H1 (cell line): ENCODE measurements at regions of chr4 and their contacts with region 1.

Region 1: GRCh38 chr4:71184195-71184781 is 154.5 kb upstream of the SLC4A4 start:
- DNase-seq: no peak
- H3K4me3 ChIP-seq: no peak overlapping the region
- H3K27ac ChIP-seq: no peak overlapping the region
- H3K4me1 ChIP-seq: 0 out of 7 replicates have a peak, but pooled peaks cover 0 to 4% (median 2%) of the 10 kb centered on the region in 4 experiments
- H3K27me3 ChIP-seq: peaks cover 3 to 27% (median 17%) of the 10 kb centered on the region in 4 experiments
- CTCF ChIP-seq: peak in 2 of 3 experiments; percentile 37 to 66; a peak in 2 of 4 replicates
- EP300 ChIP-seq: no peak
- POLR2A ChIP-seq: no peak
- RAD21 ChIP-seq: peak; percentile 63 to 68

Region 2: DNA sequence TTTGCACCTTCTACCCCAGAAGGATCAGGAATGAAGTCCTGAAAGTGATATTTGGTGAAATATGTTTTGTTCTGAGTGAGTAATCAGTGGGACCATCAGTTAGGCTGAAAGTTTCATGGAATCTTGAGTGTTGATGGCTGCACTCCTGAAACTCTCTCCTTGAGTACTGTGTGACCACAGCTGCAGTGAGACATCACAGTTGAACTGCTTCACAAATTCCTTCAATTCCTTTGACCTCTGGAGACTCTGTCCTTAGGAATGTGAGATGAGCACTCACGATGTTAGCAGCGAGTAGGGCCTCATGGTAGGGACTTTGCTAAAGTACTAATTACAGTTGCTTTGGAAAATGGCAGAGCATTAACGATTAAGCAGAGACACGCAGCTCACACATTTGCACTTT is 11.6 kb after region 1 on chr4:
- CTCF ChIA-PET with region 1: interaction called, 16 read pairs
- POLR2A ChIA-PET with region 1: interaction called, 3 read pairs
- DNase-seq: no peak
- H3K4me3 ChIP-seq: no peak overlapping the region
- H3K27ac ChIP-seq: no peak overlapping the region
- H3K4me1 ChIP-seq: peaks cover 0 to 5% (median 0%) of the 10 kb centered on the region in 4 experiments; a peak in 3 of 7 replicates
- H3K27me3 ChIP-seq: no peaks in the 10 kb centered on the region
- CTCF ChIP-seq: no peak
- EP300 ChIP-seq: no peak
- POLR2A ChIP-seq: no peak
- RAD21 ChIP-seq: no peak

Region 3: GRCh38 chr4:71277353-71277752 is 93.1 kb after region 1 on chr4:
- CTCF ChIA-PET with region 1: no interaction called
- POLR2A ChIA-PET with region 1: no interaction called
- DNase-seq: no peak
- H3K4me3 ChIP-seq: no peak overlapping the region
- H3K27ac ChIP-seq: no peak overlapping the region
- H3K4me1 ChIP-seq: peaks cover 0 to 2% (median 1%) of the 10 kb centered on the region in 4 experiments; a peak in 2 of 7 replicates
- H3K27me3 ChIP-seq: no peaks in the 10 kb centered on the region
- CTCF ChIP-seq: no peak
- EP300 ChIP-seq: no peak
- POLR2A ChIP-seq: no peak
- RAD21 ChIP-seq: no peak

Region 4: GRCh38 chr4:71293705-71294104 is 109.4 kb after region 1 on chr4:
- CTCF ChIA-PET with region 1: no interaction called
- POLR2A ChIA-PET with region 1: no interaction called
- DNase-seq: no peak
- H3K4me3 ChIP-seq: no peak overlapping the region
- H3K27ac ChIP-seq: no peak overlapping the region
- H3K4me1 ChIP-seq: no peaks in the 10 kb centered on the region
- H3K27me3 ChIP-seq: no peaks in the 10 kb centered on the region
- CTCF ChIP-seq: no peak
- EP300 ChIP-seq: no peak
- POLR2A ChIP-seq: no peak
- RAD21 ChIP-seq: no peak